ENCODE measurements at regions of chr2 and their contacts with region 1.

Region 1: DNA sequence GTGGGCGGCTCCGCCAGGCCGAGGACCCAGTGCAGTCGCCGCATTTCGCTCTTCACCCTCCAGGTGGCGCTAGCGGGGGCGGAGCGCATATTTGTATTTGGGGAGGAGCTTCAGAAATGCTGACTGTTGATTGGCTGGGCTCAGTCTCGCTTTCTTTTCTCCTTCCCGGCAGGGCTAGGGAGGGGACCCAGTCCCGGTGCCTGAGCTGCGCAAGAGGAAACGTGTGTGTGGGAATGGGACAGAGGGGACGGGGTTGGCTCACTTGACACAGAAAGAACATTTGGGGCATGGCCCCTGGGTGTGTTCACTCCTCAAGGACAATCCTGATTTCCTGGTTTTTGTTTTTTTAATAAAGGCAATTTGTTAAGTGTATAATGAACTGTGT is 20.3 kb upstream of the DNMT3A start:
- DNase-seq: peak; percentile 91 to 96 (median 93)
- H3K4me3 ChIP-seq: peak overlapping the region in 2 of 4 donors; percentile 7 to 54
- H3K27ac ChIP-seq: peak overlapping the region in 4 of 5 donors; percentile 2 to 52 (median 41)
- H3K4me1 ChIP-seq: peaks cover 0 to 5% of the 10 kb centered on the region in 2 donors
- H3K27me3 ChIP-seq: no peaks in the 10 kb centered on the region
- CTCF ChIP-seq: peak; percentile 87 to 99 (median 94)
- POLR2A ChIP-seq: peak; percentile 22 to 67

Region 2: DNA sequence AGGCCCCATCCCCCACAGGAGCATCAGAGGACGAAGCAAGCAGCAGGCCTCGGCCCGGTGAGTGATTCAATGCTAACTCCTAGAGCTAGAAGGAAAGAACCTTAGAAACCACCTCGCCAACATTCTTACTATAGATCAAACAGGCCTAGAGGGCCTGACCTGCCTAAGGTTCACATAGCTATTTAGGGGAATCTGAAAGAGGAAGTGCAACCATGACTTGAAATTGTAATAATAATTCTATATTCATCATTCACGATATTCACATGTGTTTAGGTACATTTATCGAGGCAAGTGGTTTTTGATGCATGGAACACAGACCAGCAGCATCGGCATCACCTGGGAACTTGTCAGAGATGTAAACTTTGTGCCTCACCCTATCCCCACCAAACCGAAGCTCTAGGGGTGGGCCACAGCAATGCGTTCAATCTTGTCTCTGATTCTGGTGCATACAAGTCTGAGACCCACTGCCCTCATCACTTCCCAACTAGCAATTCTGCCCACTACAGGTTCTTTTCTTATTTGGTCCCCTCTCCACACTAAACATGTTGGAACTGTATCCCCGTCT is 57.7 kb after region 1 on chr2:
- intact Hi-C with region 1: no loop called
- DNase-seq: no peak
- H3K4me3 ChIP-seq: no peak overlapping the region
- H3K27ac ChIP-seq: no peak overlapping the region
- H3K4me1 ChIP-seq: no peaks in the 10 kb centered on the region
- H3K27me3 ChIP-seq: no peaks in the 10 kb centered on the region
- CTCF ChIP-seq: no peak
- POLR2A ChIP-seq: no peak

Region 3: DNA sequence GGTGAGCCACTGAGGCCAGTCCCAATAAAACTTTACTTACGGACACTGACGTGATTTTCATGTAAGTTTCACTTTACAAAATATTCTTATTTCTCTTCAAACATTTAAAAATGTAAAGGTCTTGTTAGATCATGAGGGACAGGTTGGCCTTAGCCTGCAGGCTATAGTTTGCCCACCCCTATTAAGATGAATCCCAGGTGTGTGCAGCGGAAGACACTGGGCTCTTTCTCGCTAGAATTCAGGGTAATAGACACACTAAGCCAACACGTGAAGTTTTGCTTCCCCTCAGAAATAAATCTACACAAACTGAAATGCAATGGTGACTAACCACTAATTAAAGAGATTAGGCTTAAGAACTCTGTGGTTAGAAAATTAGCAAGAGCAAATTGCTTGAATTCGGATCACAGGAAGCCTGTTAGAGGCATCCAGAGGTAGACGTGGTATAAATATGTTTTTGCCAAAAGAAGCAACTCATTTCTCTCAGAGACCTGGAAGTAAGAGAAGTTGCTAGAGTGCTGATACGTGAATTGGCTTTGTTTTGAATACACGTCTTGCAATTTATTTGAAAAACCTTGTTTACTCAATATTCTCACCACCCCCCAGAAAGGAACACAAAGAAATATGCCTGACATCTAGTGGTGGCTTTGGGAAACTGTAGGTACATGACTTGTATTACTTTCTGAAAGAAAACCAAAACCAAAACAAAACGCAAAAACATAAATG is 159.8 kb after region 1 on chr2:
- intact Hi-C with region 1: loop called in 1 of 2 experiments (anchors 10 kb)
- DNase-seq: peak in 5 of 7 donors; percentile 39 to 65 (median 48)
- H3K4me3 ChIP-seq: peak overlapping the region in 2 of 4 donors; percentile 18 to 52
- H3K27ac ChIP-seq: peak overlapping the region in 1 of 5 donors; percentile 52
- H3K4me1 ChIP-seq: peaks cover 0 to 4% of the 10 kb centered on the region in 2 donors
- H3K27me3 ChIP-seq: no peaks in the 10 kb centered on the region
- CTCF ChIP-seq: peak; percentile 74 to 94 (median 87)
- POLR2A ChIP-seq: no peak